Activated CD4-positive, alpha-beta memory T cell treated with anti-CD3 and anti-CD28 coated beads for 36 hours (primary cell): ENCODE measurements at regions of chr11 and their contacts with region 1.

Region 1: GRCh38 chr11:59171508-59172322 is at the start of gene DTX4:
- DNase-seq: peak; percentile 93
- H3K4me3 Mint-ChIP-seq: peak within 1 kb of the TSS; percentile 72
- H3K27ac Mint-ChIP-seq: no peak within 1 kb of the TSS
- H3K4me1 Mint-ChIP-seq: peaks cover 21% of the 10 kb centered on the region
- H3K27me3 Mint-ChIP-seq: peaks cover 10% of the 10 kb centered on the region
- total RNA-seq, gene DTX4: 0.05 to 0.07 TPM

Region 2: DNA sequence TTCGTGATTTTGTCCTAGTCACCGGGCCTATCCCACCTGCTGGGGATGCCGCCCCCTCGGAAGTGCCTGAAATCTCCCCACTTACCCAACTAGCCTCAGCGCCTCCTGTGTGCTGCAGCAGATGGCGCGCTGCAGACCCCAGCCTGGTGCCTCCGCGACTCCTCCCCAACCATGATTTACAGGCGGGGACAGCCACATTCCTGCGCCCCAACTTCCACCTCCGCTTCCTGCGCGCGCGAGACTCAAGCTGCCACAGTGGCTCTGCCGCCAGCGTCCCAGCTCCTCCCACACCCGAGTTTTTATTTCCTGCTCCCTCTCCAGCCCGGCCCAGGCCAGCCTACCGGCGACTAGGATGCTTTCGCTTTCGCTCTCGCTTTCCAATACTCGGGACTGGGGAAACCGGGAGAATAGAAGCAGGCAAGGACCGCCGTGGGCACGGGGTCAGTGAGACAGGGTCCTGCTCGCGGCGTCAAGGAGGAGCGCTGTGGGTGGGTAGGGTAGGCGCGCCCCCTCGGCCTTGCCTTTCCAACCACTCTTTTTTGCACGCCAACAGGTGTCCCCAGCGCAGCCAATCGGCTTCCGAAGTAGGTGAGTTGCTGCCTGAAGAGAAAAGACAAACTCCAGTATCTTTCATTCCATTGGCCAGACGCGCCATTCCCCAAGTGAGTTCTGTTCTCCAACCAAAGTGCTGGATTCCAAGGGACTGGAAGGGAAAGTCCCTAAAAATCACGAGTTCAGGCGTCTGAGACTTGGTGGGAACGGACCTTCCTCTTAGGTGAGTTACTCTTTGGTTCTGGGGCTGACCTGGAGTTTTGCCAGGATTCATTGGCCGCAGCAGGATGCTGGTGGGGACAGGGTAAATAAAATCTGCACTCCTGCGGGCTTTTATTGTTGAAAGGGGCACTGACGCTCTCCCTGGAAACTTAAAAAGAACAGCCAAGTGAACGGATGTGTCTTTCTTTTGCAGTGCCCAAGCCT is 28.9 kb before region 1 on chr11 and contains the start of gene FAM111A:
- CTCF ChIA-PET with region 1: interaction called, 16 read pairs
- POLR2A ChIA-PET with region 1: no interaction called
- intact Hi-C with region 1: loop called (anchors 2 kb)
- DNase-seq: peak; percentile 90
- H3K4me3 Mint-ChIP-seq: peak within 1 kb of the TSS; percentile 94
- H3K27ac Mint-ChIP-seq: peak within 1 kb of the TSS; percentile 93
- H3K4me1 Mint-ChIP-seq: peaks cover 50% of the 10 kb centered on the region
- H3K27me3 Mint-ChIP-seq: no peaks in the 10 kb centered on the region
- total RNA-seq, gene FAM111A: 87.6 to 87.8 TPM

Region 3: DNA sequence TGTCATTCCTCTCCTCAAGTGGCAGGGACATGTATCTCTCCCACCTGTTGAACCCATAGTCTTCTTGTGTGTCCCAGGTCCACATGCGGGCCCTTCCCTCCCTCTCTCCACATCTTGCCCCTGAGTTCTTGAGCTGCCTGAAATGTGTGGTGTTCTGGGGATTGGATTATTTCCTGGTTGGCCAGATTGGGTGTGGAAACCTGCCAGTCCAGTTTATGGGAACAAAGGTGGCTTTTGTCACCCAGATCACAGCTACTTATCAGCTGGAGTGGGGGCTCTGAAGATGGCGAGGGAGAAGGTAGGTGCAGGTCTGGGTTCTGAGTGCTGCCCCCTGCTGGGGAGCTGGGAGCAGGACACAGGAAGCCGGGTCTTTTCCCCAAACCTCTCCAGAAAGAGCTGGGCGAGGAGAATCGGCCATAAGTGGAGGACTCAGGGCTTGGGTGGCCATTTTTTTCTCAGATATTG is 14.4 kb after region 1 on chr11:
- CTCF ChIA-PET with region 1: interaction called, 157 read pairs
- POLR2A ChIA-PET with region 1: no interaction called
- intact Hi-C with region 1: loop called (anchors 1 kb)
- DNase-seq: peak; percentile 70
- H3K4me3 Mint-ChIP-seq: no peak overlapping the region
- H3K27ac Mint-ChIP-seq: no peak overlapping the region
- H3K4me1 Mint-ChIP-seq: peaks cover 2% of the 10 kb centered on the region
- H3K27me3 Mint-ChIP-seq: no peaks in the 10 kb centered on the region

Region 4: DNA sequence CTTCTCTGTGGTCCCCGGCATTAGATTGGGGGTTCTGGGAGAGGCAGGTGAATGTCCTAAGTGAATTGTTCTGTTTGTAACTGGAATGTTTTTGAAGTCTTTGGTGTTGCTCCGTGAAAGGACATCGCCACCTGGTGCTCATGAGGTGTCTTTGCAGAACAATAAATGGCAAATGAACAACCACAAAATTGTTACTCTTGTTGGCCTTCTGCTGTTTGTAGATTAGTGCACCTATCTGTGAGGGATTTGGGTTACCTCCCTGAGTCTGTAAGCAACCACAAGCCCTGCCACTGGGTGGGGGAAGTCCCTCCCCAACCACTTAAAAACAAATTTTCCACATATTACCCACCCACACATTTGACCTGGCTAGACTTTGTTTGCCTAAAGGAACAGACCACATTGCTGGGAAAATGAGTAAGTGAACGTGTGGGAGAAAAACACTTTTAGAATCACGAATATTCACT is 36.3 kb after region 1 on chr11:
- CTCF ChIA-PET with region 1: interaction called, 61 read pairs
- POLR2A ChIA-PET with region 1: interaction called, 3 read pairs
- intact Hi-C with region 1: loop called (anchors 1 kb)
- DNase-seq: peak; percentile 44
- H3K4me3 Mint-ChIP-seq: no peak overlapping the region
- H3K27ac Mint-ChIP-seq: no peak overlapping the region
- H3K4me1 Mint-ChIP-seq: peaks cover 32% of the 10 kb centered on the region
- H3K27me3 Mint-ChIP-seq: peaks cover 13% of the 10 kb centered on the region

Region 5: GRCh38 chr11:59283825-59284772 is 112.4 kb after region 1 on chr11:
- CTCF ChIA-PET with region 1: interaction called, 15 read pairs
- POLR2A ChIA-PET with region 1: no interaction called
- intact Hi-C with region 1: loop called (anchors 1 kb)
- DNase-seq: peak; percentile 58
- H3K4me3 Mint-ChIP-seq: peak overlapping the region; percentile 42
- H3K27ac Mint-ChIP-seq: no peak overlapping the region
- H3K4me1 Mint-ChIP-seq: peaks cover 14% of the 10 kb centered on the region
- H3K27me3 Mint-ChIP-seq: peaks cover 5% of the 10 kb centered on the region

Region 6: DNA sequence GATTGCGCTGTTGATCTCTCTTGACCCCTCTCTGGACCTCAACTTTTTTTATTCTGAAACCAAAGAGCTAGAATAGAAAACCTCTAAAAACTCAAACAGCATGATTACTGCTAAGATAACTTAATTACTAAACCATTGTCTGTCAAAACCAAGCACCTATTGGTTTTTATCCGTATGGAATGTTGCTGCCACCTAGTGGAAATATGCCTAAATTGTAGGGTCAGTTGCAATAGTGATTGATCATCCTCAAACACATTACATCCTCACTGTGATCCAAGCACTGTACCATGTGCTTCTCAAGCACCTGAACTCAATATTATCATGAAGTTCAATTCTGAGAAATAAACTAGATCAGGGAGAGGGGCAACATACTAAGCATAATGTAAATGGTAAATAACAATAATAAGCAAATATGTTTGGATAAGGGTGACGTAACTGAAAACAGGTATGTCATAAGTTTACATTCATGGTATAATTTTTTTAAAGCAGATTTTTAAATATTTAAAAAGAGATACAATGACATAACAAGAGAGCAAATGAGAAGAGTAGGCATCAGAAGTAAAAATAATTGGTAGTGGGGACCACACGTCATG is 258.3 kb after region 1 on chr11:
- CTCF ChIA-PET with region 1: interaction called, 69 read pairs
- POLR2A ChIA-PET with region 1: no interaction called
- intact Hi-C with region 1: loop called (anchors 1 kb)
- DNase-seq: no peak
- H3K4me3 Mint-ChIP-seq: no peak overlapping the region
- H3K27ac Mint-ChIP-seq: no peak overlapping the region
- H3K4me1 Mint-ChIP-seq: no peaks in the 10 kb centered on the region
- H3K27me3 Mint-ChIP-seq: peaks cover 1% of the 10 kb centered on the region